H1 (cell line): ENCODE measurements at regions of chr15 and their contacts with region 1.

Region 1: DNA sequence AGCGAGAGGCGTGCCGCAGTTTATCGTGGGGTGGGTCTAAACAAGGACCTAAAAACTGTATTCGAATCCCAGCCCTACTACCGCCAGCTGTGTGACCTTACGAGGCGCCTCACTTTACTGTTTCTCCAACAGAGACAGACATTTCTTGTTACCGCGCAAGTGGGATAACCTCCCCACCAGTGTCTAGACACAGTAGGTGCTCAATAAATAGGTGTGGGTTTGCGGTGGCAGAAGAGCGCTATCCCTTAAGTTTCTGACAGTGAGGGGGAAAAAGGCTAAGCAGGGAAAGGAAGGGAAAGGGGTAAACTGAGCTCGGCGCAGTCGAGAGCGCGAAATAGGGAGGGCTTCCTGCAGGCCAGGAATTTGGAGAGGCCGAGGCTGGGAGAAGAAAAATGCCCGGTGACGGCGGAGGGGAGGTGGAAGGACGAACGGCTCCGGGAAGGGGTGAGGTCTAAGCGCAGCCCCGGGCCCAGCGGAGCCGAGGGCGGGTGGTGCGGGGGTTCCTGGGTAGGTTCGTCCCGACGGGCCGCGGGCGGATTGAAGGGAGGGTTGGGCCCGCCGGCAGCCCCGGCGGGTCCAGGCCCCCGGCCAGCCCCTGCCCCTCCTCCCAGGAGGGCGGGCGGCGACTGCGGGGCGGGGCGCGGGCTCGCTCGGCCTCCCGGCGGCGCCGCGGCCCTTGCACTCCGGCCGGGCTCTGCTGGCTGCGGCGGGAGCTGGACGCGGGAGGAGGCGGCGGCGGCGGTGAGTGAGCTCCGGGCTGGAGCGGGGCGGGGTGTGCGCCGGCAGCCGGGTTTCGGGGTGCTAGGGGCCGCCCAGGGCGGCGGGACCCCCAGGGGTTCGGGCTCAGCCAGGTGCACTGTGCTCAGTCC is at the start of gene CGNL1:
- DNase-seq: peak in 1 of 2 experiments; percentile 77
- H3K4me3 ChIP-seq: peak within 1 kb of the TSS; percentile 59 to 66 (median 64)
- H3K27ac ChIP-seq: no peak within 1 kb of the TSS
- H3K4me1 ChIP-seq: peaks cover 10 to 23% (median 18%) of the 10 kb centered on the region in 4 experiments; a peak in 6 of 7 replicates
- H3K27me3 ChIP-seq: peaks cover 0 to 10% (median 5%) of the 10 kb centered on the region in 4 experiments; a peak in 4 of 7 replicates
- CTCF ChIP-seq: no peak
- EP300 ChIP-seq: no peak
- POLR2A ChIP-seq: no peak; a peak in 1 of 3 replicates
- RAD21 ChIP-seq: no peak
- total RNA-seq, gene CGNL1: 72.7 and 75.6 TPM in 2 replicates

Region 2: GRCh38 chr15:57298843-57299550 is 77.1 kb before region 1 on chr15:
- CTCF ChIA-PET with region 1: no interaction called
- POLR2A ChIA-PET with region 1: no interaction called
- DNase-seq: peak in 1 of 2 experiments; percentile 36
- H3K4me3 ChIP-seq: no peak overlapping the region
- H3K27ac ChIP-seq: no peak overlapping the region; the same call in 1 of the 2 replicates
- H3K4me1 ChIP-seq: peaks cover 5 to 11% (median 6%) of the 10 kb centered on the region in 4 experiments
- H3K27me3 ChIP-seq: no peaks in the 10 kb centered on the region
- CTCF ChIP-seq: no peak
- EP300 ChIP-seq: no peak
- POLR2A ChIP-seq: no peak
- RAD21 ChIP-seq: no peak

Region 3: GRCh38 chr15:57327985-57328471 is 48.0 kb before region 1 on chr15:
- CTCF ChIA-PET with region 1: no interaction called
- POLR2A ChIA-PET with region 1: no interaction called
- DNase-seq: no peak
- H3K4me3 ChIP-seq: no peak overlapping the region
- H3K27ac ChIP-seq: no peak overlapping the region
- H3K4me1 ChIP-seq: peaks cover 0 to 2% (median 0%) of the 10 kb centered on the region in 4 experiments; a peak in 2 of 7 replicates
- H3K27me3 ChIP-seq: no peaks in the 10 kb centered on the region; a peak in 1 of 7 replicates
- CTCF ChIP-seq: no peak
- EP300 ChIP-seq: no peak
- POLR2A ChIP-seq: no peak
- RAD21 ChIP-seq: no peak

Region 4: GRCh38 chr15:57356636-57357035 is 19.4 kb before region 1 on chr15:
- CTCF ChIA-PET with region 1: interaction called, 23 read pairs
- POLR2A ChIA-PET with region 1: interaction called, 11 read pairs
- DNase-seq: no peak
- H3K4me3 ChIP-seq: peak overlapping the region in 1 of 4 experiments; percentile 11; a peak in 1 of 8 replicates
- H3K27ac ChIP-seq: 0 out of 2 replicates have a peak overlapping the region, but pooled peaks have one; percentile 8
- H3K4me1 ChIP-seq: peaks cover 2 to 28% (median 13%) of the 10 kb centered on the region in 4 experiments; a peak in 5 of 7 replicates
- H3K27me3 ChIP-seq: no peaks in the 10 kb centered on the region
- CTCF ChIP-seq: no peak
- EP300 ChIP-seq: no peak
- POLR2A ChIP-seq: no peak; a peak in 1 of 3 replicates
- RAD21 ChIP-seq: no peak

Region 5: DNA sequence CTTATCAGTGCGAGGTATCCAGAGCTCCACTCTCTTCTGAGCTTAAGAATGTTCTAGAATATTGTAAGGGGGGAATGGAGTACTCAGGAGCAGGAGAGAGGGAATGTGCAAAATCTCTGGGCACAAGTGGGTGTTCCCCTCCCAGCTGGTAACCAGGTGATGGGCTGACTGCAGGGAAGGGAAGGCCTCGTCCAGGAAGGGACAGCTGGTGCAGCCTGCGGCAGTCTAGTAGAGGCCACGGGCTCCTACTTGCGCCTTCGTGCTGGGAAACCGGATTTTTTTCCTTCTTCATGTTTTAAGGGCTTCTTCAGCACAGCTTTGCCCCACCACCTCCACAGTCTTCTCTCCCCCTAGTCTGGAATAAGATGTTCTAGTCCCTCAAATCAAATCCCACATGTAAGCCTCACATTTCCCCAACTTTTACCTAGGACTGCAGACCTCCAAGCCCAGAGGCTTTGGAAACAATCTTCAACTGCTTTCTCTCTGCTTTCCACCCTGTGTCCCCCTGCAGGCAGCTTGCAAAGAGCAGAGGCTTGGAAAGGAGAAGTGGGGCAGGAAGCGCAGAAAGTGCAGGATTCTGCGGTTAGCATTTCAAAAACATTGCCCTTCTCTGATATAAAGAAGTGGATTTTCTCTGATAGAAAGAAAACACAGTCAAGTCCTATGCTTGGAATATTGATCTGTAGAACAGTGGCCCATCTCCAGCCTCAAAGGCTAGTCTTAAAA is 11.6 kb before region 1 on chr15:
- CTCF ChIA-PET with region 1: interaction called, 23 read pairs
- POLR2A ChIA-PET with region 1: interaction called, 4 read pairs
- DNase-seq: no peak
- H3K4me3 ChIP-seq: no peak overlapping the region
- H3K27ac ChIP-seq: no peak overlapping the region
- H3K4me1 ChIP-seq: peaks cover 0 to 7% (median 4%) of the 10 kb centered on the region in 4 experiments; a peak in 5 of 7 replicates
- H3K27me3 ChIP-seq: no peaks in the 10 kb centered on the region
- CTCF ChIP-seq: peak; percentile 36 to 54 (median 39); a peak in 3 of 4 replicates
- EP300 ChIP-seq: no peak
- POLR2A ChIP-seq: no peak
- RAD21 ChIP-seq: peak in 1 of 2 experiments; percentile 52; a peak in 2 of 4 replicates

Region 6: DNA sequence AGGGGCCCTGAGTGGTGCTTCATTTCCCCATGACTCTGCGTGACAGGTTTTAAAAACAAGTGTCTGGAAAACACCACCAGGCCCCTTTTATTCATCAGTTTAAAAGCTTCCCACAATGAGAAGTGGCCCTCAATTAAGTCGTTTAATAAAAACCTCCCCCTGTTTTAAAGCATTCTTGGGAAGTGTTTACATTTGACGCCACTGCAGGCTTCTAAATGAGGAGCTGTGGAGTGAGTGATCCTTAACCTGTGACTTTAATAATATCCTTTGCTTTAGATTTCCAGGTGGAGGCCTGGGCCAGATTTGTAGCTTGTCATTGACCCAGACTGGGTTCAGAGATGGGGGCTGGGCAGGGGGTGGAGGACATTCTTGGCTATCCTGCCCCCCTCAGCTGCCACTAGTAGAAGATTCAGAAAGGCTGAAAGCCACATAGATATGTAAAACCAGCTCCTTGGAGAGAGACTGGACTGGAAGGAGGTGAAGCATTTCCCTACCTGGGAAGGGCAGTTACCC is 11.6 kb after region 1 on chr15:
- CTCF ChIA-PET with region 1: interaction called, 16 read pairs
- POLR2A ChIA-PET with region 1: interaction called, 23 read pairs
- DNase-seq: no peak
- H3K4me3 ChIP-seq: peak overlapping the region; percentile 42 to 56 (median 46); a peak in 7 of 8 replicates
- H3K27ac ChIP-seq: peak overlapping the region; percentile 68; the same call in 1 of the 2 replicates
- H3K4me1 ChIP-seq: peaks cover 12 to 45% (median 35%) of the 10 kb centered on the region in 4 experiments; a peak in 6 of 7 replicates
- H3K27me3 ChIP-seq: no peaks in the 10 kb centered on the region
- CTCF ChIP-seq: no peak
- EP300 ChIP-seq: no peak
- POLR2A ChIP-seq: 0 out of 3 replicates have a peak, but pooled peaks of 1 of the 2 experiments have one; percentile 21
- RAD21 ChIP-seq: peak in 1 of 2 experiments; percentile 15; a peak in 1 of 4 replicates

Region 7: DNA sequence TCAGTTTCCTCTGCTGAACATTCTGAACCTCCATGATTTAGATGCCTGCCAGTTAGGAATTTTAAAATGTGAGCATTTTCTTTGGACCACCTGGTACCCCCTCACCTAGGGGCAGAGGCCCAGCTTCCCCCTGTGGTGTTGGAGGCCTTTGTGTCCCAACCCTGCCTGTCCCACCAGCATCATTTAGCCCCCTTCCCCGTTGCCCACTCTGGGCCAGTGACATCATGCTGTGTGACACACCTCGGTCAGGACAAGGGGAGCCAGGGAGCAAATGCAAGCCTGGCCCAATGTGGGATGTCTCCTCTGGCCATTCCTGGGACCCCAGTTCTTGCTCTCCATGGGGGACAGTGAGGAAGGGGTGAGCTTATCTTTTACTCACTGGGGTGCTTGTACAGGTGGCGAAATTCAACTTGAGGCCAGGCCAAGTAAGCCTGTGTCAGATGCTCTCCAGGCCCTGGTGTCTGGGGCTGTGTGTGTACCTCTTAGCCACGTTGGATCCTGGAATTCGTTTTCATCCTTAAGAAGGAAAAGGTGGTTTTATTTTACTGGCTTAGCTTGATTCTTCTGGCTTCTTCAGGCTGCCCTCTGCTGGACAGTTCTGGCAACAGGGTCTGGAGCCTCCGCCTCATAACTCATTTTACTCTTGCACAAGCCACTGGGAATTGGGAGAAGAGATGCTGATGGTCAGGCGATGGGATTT is 165.9 kb after region 1 on chr15:
- CTCF ChIA-PET with region 1: interaction called, 11 read pairs
- POLR2A ChIA-PET with region 1: no interaction called
- DNase-seq: peak in 1 of 2 experiments; percentile 83
- H3K4me3 ChIP-seq: no peak overlapping the region
- H3K27ac ChIP-seq: no peak overlapping the region
- H3K4me1 ChIP-seq: 0 out of 7 replicates have a peak, but pooled peaks cover 0 to 1% (median 0%) of the 10 kb centered on the region in 4 experiments
- H3K27me3 ChIP-seq: no peaks in the 10 kb centered on the region
- CTCF ChIP-seq: peak; percentile 63 to 85 (median 70)
- EP300 ChIP-seq: no peak
- POLR2A ChIP-seq: no peak
- RAD21 ChIP-seq: peak; percentile 56 to 65